Activated B cell treated with CpG ODN at 0.5 μM for 24 hours (primary cell): ENCODE measurements at regions of chr10 and their contacts with region 1.

Region 1: GRCh38 chr10:48821692-48822091 is 117.9 kb downstream of the LRRC18 start:
- DNase-seq: no peak
- ATAC-seq: no peak
- H3K4me3 Mint-ChIP-seq: no peak overlapping the region
- H3K27ac Mint-ChIP-seq: no peak overlapping the region
- H3K4me1 Mint-ChIP-seq: peaks cover 5% of the 10 kb centered on the region
- H3K27me3 Mint-ChIP-seq: no peaks in the 10 kb centered on the region
- CTCF ChIP-seq: no peak

Region 2: GRCh38 chr10:48792687-48793096 is 29.0 kb before region 1 on chr10:
- CTCF ChIA-PET with region 1: interaction called, 3 read pairs
- POLR2A ChIA-PET with region 1: no interaction called
- intact Hi-C with region 1: loop called (anchors 5 kb)
- DNase-seq: no peak
- ATAC-seq: no peak
- H3K4me3 Mint-ChIP-seq: no peak overlapping the region
- H3K27ac Mint-ChIP-seq: no peak overlapping the region
- H3K4me1 Mint-ChIP-seq: peaks cover under 1% of the 10 kb centered on the region
- H3K27me3 Mint-ChIP-seq: no peaks in the 10 kb centered on the region
- CTCF ChIP-seq: no peak